Head of caudate nucleus (tissue), 42 donors: ENCODE measurements at regions of chr11 and their contacts with region 1.

Region 1: DNA sequence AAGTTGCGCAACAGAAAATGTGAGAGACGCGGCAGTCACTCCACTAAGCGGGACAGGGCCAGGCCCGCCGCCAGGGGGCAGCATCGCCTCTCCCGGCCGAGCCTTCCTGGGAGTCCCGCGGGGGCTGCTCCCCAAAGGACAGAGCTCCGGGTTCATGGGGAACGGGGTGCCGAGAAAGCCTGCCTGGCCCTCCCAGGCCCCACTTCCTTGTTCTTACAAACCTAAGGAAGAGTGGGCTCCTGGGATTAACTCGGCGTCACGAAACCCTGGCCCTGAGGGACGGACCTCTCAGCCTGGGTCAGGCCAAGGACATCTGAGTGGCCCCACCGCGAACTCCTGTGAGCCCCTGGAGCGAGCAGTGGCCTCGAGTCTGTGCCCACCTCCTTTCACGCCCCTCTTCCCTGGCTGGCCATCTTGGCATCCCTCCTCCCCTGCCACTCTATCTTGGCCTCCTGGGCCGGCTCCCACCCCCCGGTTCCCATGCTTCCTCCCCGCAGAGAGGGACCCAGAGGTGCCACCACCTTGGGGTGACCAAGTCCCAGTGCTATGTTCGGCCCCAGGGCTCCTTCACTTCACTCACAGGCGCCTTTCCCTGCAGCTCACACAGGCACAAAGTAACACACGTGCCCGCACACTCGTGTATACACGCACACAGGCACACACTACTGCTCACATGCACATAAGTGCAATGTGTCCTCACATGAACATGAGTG is 99.9 kb upstream of the FGF3 start:
- DNase-seq: peak; percentile 37 to 87 (median 73)

Region 2: DNA sequence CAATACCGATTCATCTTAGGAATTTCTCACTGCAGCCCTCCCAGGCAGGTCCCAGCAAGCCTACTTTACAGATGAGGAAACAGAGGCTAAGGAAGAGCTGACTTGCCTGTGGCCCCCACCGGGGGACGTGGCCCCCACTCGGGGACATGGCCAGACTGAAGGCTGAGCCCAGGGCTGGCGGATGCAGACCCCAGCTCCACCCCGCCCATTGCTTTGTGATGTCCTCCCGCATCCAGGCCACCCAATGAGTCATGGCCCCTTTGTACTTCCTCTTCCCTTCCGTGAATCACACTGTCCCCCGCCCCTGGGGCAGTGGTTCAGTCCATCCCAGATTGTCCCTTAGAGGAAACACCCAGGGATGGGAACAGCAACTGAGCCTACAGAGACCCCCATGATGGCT is 43.1 kb after region 1 on chr11:
- intact Hi-C with region 1: no loop called
- DNase-seq: no peak

Region 3: DNA sequence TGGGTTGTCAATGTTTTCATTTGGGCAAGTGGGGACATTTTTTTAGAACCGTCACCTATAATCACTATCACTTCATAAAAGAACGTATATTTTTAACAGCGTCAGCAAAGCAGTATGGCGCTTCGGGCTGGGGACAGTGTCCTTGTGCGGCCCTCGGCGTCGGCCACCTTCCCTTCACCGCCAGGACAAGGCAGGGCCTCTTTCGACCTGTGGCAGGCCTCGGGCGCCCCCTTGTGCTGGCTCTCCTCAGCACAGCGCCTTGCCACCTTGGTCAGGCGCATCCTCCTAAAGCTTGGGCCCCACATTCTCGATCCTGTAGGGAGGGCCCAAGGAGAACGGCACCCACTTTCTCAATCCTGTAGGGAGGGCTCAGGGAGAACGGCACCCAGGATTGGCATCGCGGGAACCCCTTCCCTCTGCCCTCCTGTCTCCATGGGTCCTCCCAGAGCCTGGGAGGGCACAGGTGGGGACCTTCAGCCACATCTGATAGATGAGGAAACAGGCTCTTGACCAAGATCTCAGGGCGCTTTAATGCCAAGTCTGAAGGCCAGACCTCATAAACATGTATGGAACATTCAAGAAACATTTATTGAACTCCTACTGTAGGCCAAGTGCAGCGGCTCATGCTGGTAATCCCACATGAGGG is 272.5 kb after region 1 on chr11:
- intact Hi-C with region 1: loop called (anchors 5 kb)
- DNase-seq: peak; percentile 12 to 79 (median 58)